Tibial artery (tissue), 4 donors: ENCODE measurements at regions of chr7 and their contacts with region 1.

Region 1: DNA sequence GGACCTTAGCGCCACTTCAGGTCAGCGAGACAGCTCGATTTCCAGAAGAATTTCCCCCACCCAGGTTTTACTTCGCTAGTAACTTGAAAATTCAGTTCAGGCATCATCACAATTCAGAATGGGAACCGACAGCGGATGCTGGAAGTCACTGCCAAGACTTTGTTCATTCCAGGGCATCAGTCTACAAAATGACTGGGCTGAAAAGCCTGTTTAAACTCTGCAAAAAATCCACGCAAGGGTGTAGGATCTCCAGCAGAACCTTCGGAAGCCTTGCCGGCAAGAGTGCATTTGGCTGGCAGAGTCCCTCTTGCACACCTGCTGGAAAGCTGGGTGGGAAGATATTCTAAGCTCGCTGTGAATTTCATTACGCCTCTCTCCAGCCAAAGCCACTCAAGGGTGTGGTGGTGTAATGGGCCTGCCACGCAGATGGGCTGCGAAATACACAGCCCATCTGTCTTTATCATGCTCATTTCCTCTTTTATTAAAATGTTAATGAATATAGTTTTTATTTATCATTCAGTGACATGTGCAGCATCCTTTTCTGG is 672.0 kb upstream of the FOXK1 start:
- DNase-seq: no peak
- H3K4me3 ChIP-seq: no peak overlapping the region
- H3K27ac ChIP-seq: no peak overlapping the region
- H3K4me1 ChIP-seq: no peaks in the 10 kb centered on the region
- H3K27me3 ChIP-seq: no peaks in the 10 kb centered on the region
- CTCF ChIP-seq: no peak

Region 2: DNA sequence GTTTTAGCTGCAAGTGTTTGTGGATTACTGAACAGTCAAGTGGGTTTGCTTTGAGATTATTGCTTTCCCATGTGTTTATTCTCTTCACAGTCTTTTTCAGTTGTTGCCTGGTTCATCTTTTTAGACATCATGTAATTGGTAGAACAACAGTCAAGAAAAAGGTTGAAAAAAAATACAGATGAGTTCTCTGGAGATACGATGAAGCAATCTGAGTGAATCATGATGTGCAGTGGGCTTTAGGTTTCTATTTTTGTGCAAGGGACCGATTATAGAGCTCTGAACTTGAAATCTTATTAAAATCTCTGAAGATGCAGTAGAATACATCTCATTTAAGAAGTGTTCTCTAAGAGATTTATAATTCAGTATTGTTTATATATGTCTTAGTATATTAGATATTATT is 563.3 kb before region 1 on chr7:
- intact Hi-C with region 1: loop called (anchors 5 kb)
- DNase-seq: no peak
- H3K4me3 ChIP-seq: no peak overlapping the region
- H3K27ac ChIP-seq: no peak overlapping the region
- H3K4me1 ChIP-seq: no peaks in the 10 kb centered on the region
- H3K27me3 ChIP-seq: no peaks in the 10 kb centered on the region
- CTCF ChIP-seq: no peak